Panc1 (cell line): ENCODE measurements at regions of chrX and their contacts with region 1.

Region 1: GRCh38 chrX:150772150-150772970 is 79.2 kb downstream of the MTMR1 start:
- DNase-seq: peak; percentile 27
- ATAC-seq: peak; percentile 95
- H3K4me3 ChIP-seq: no peak overlapping the region
- H3K27ac ChIP-seq: no peak overlapping the region
- H3K4me1 ChIP-seq: no peaks in the 10 kb centered on the region
- H3K27me3 ChIP-seq: no peaks in the 10 kb centered on the region
- CTCF ChIP-seq: no peak

Region 2: DNA sequence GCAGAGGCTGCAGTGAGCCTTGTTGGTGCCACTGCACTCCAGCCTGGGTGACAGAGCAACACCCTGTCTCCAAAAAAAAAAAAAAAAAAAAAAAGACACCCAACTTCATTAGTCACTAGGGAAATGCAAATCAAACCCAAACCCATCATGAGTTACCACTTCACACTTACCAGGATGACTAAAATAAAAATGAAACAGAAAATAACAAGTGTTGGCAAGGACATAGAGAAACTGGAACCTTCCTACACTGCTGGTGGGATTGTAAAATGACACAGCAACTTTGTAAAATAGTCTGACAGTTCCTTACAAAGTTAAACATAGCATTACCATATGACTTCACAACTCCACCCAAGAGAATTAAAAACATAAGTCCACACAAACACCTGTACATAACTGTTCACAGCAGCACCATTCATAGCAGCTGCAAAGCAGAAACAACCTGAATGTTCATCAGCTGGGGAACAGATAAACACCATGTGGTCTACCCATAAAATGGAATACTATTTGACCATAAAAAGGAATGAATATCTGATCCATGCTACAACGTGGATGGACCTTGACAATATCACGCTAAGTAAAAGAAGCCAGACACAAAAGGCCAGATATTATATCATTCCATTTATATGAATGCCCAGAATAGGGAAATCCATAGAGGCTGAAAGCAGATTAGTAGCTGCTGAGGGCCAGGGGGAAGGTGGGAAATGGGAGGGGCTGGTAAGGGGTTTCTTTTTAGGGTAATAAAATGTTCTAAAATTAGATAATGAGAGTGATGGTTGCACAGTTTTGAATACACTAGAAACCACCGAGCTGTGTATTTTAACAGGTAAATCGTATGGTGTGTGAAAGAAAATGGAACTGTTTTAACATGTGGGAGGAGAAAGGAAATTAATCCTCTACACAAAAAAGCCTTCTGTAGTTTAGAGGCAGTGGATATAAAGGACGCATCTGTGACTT is 107.8 kb after region 1 on chrX:
- CTCF ChIA-PET with region 1: no interaction called
- POLR2A ChIA-PET with region 1: no interaction called
- in situ Hi-C with region 1: no loop called
- intact Hi-C with region 1: loop called (anchors 10 kb)
- DNase-seq: no peak
- ATAC-seq: no peak
- H3K4me3 ChIP-seq: no peak overlapping the region
- H3K27ac ChIP-seq: no peak overlapping the region
- H3K4me1 ChIP-seq: peaks cover 6% of the 10 kb centered on the region
- H3K27me3 ChIP-seq: no peaks in the 10 kb centered on the region
- CTCF ChIP-seq: no peak

Region 3: DNA sequence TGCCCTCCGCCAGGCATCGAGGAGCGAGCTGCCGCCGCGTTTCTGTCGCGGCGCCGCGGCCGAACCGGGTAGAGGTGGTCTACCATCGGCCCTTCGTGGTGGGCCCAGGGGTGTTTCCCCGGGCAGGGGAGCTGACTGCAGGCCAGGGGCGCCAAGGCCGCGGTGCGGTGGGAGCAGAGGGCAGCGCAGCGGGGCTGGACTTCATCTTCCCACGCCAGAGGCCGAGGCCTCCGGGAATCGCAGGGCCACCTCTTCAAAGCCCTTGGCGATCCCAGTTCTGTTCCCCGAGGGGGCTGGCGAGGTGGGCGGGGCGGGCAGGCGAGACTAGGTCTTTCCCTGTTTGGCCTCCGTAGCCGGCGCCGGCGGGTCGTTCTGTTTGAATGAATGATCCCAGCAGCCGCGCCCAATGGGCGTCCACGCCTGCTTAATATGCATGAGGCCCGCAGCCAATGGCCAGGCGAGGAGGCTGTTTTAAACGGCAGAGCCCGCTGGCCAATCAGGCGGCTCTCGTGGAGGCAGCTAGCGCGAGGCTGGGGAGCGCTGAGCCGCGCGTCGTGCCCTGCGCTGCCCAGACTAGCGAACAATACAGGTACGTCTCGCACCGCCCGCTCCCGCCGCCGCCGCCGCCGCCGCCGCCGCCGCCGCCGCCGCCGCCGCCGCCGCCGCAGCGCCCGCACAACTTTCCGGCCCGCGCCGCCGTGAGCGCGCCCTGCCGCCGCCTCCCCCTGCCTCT is 210.6 kb after region 1 on chrX and contains the start of gene HMGB3:
- CTCF ChIA-PET with region 1: interaction called, 3 read pairs
- POLR2A ChIA-PET with region 1: no interaction called
- in situ Hi-C with region 1: no loop called
- intact Hi-C with region 1: loop called (anchors 5 kb)
- DNase-seq: peak; percentile 69
- ATAC-seq: peak; percentile 98
- H3K4me3 ChIP-seq: peak within 1 kb of the TSS; percentile 78 to 89
- H3K27ac ChIP-seq: peak within 1 kb of the TSS; percentile 90
- H3K4me1 ChIP-seq: peaks cover 17% of the 10 kb centered on the region
- H3K27me3 ChIP-seq: no peaks in the 10 kb centered on the region
- CTCF ChIP-seq: no peak
- total RNA-seq, gene HMGB3: 251 TPM

Region 4: GRCh38 chrX:151082076-151082948 is 310.0 kb after region 1 on chrX:
- CTCF ChIA-PET with region 1: interaction called, 13 read pairs
- POLR2A ChIA-PET with region 1: no interaction called
- in situ Hi-C with region 1: no loop called
- intact Hi-C with region 1: loop called (anchors 1 kb)
- DNase-seq: peak; percentile 35
- ATAC-seq: peak; percentile 96
- H3K4me3 ChIP-seq: peak overlapping the region; percentile 17 to 52
- H3K27ac ChIP-seq: 0 out of 2 replicates have a peak overlapping the region, but pooled peaks have one; percentile 18
- H3K4me1 ChIP-seq: 0 out of 2 replicates have a peak, but pooled peaks cover 4% of the 10 kb centered on the region
- H3K27me3 ChIP-seq: peaks cover 2% of the 10 kb centered on the region
- CTCF ChIP-seq: peak; percentile 98